GM12878 (cell line): ENCODE measurements at regions of chr17 and their contacts with region 1.

Region 1: DNA sequence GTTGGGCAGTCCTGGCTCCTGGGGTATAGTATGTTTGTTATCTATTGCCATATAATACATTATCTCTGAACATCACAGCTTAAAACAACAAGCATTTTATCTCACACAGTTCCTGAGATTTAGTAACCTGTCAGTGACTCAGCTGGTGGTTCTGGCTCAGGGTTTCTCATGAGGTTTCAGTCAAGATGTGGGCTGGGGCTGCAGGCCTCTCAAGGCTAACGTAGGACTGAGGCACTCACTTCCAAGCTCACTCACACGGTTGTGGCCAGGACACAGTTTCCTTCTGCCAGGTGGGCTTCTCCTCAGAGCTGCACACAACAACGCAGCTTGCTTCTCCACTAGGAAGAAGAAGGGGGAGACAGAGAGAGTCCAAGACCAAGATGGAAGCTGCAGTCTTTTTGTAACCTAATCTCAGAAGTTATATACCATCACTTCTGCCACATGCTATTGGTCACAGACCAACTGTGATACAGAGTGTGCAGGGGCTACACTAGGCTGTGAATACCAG is 10.3 kb upstream of the MED13 start:
- DNase-seq: no peak
- ATAC-seq: peak; percentile 17; the same call in 1 of the 3 replicates
- H3K4me3 ChIP-seq: no peak overlapping the region
- H3K27ac ChIP-seq: no peak overlapping the region
- H3K4me1 ChIP-seq: 0 out of 2 replicates have a peak, but pooled peaks cover 2% of the 10 kb centered on the region
- H3K27me3 ChIP-seq: no peaks in the 10 kb centered on the region; a peak in 1 of 4 replicates
- CTCF ChIP-seq: no peak
- EP300 ChIP-seq: no peak
- POLR2A ChIP-seq: no peak
- RAD21 ChIP-seq: no peak

Region 2: DNA sequence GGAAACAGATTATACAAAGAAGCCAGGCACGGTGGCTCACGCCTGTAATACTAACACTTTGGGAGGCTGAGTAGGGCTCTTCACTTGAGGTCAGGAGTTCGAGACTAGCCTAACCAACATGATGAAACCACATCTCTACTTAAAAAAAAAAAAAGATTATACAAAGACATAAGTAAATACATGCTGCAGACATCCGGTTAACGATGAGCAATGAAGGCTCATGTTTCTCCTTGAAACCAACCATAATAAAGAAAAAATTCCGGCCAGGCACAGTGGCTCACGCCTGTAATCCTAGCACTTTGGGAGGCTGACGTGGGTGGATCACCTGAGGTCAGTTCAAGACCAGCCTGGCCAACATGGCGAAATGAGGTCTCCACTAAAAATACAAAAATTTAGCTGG is 192.2 kb before region 1 on chr17:
- CTCF ChIA-PET with region 1: no interaction called
- POLR2A ChIA-PET with region 1: no interaction called
- RAD21 ChIA-PET with region 1: no interaction called
- SMC1A ChIA-PET with region 1: no interaction called
- in situ Hi-C with region 1: no loop called
- intact Hi-C with region 1: no loop called
- DNase-seq: no peak
- ATAC-seq: no peak
- H3K4me3 ChIP-seq: no peak overlapping the region
- H3K27ac ChIP-seq: no peak overlapping the region
- H3K4me1 ChIP-seq: no peaks in the 10 kb centered on the region
- H3K27me3 ChIP-seq: no peaks in the 10 kb centered on the region
- CTCF ChIP-seq: no peak
- EP300 ChIP-seq: no peak
- POLR2A ChIP-seq: no peak
- RAD21 ChIP-seq: no peak

Region 3: GRCh38 chr17:62059414-62059813 is 15.9 kb before region 1 on chr17:
- CTCF ChIA-PET with region 1: interaction called, 4 read pairs
- POLR2A ChIA-PET with region 1: no interaction called
- RAD21 ChIA-PET with region 1: no interaction called
- SMC1A ChIA-PET with region 1: interaction called, 11 read pairs
- in situ Hi-C with region 1: no loop called
- intact Hi-C with region 1: no loop called
- DNase-seq: no peak
- ATAC-seq: peak; percentile 25
- H3K4me3 ChIP-seq: 0 out of 2 replicates have a peak overlapping the region, but pooled peaks have one; percentile 46
- H3K27ac ChIP-seq: no peak overlapping the region
- H3K4me1 ChIP-seq: no peaks in the 10 kb centered on the region
- H3K27me3 ChIP-seq: no peaks in the 10 kb centered on the region
- CTCF ChIP-seq: no peak
- EP300 ChIP-seq: no peak
- POLR2A ChIP-seq: no peak
- RAD21 ChIP-seq: no peak

Region 4: GRCh38 chr17:62093188-62094155 is 18.1 kb after region 1 on chr17:
- CTCF ChIA-PET with region 1: interaction called, 16 read pairs
- POLR2A ChIA-PET with region 1: interaction called, 4 read pairs
- RAD21 ChIA-PET with region 1: interaction called, 9 read pairs
- SMC1A ChIA-PET with region 1: interaction called, 12 read pairs
- in situ Hi-C with region 1: no loop called
- intact Hi-C with region 1: no loop called
- DNase-seq: peak; percentile 90
- ATAC-seq: peak; percentile 96
- H3K4me3 ChIP-seq: peak overlapping the region; percentile 56; the same call in 1 of the 2 replicates
- H3K27ac ChIP-seq: peak overlapping the region; percentile 74
- H3K4me1 ChIP-seq: peaks cover 37% of the 10 kb centered on the region
- H3K27me3 ChIP-seq: no peaks in the 10 kb centered on the region
- CTCF ChIP-seq: no peak
- EP300 ChIP-seq: peak; percentile 65 to 94; a peak in 3 of 4 replicates
- POLR2A ChIP-seq: peak; percentile 26; the same call in 1 of the 2 replicates
- RAD21 ChIP-seq: no peak